ENCODE measurements at regions of chr6 and their contacts with region 1.

Region 1: DNA sequence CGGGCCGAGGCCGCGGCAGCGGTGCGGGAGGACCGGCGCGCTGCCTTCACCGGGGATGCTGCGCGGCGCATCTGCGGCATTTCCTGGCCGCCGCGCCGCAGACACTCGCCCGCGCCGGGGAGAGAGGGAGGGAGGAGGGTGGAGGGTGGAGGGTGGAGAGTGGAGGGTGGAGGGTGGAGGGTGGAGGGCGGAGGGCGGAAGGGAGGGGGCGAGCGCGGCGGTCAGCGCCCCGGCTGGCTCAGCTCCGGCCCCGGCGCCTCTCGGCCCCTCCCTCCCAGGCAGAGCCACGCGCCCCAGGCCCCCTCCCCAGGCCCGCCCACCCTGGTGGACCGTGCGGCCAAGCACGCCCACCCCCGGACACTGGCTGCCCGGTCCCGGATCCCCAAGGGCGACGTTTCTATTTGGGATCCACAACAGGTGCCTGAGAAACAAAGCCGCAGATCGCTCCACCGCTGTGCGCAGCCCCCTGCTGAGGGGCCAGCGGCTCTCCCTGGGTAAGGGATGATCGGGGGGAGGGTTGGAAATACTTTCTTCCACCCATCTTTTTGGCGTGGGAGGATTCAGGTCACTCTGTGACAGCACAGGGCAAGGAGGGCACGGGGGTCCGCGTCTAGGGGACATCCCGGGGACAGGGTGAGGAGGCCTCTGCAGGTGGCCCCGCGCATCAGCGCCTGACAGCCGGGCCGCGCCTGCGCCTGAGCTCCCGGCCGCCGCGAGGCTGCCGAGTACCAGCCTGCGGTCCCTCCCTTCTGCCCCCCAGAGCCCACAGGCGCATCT is 111.1 kb upstream of the BEND6 start:
- DNase-seq: peak; percentile 65
- H3K4me3 Mint-ChIP-seq: peak overlapping the region; percentile 92
- H3K27ac Mint-ChIP-seq: peak overlapping the region; percentile 88
- H3K4me1 Mint-ChIP-seq: peaks cover 16% of the 10 kb centered on the region
- H3K27me3 Mint-ChIP-seq: no peaks in the 10 kb centered on the region
- CTCF ChIP-seq: peak; percentile 33

Region 2: DNA sequence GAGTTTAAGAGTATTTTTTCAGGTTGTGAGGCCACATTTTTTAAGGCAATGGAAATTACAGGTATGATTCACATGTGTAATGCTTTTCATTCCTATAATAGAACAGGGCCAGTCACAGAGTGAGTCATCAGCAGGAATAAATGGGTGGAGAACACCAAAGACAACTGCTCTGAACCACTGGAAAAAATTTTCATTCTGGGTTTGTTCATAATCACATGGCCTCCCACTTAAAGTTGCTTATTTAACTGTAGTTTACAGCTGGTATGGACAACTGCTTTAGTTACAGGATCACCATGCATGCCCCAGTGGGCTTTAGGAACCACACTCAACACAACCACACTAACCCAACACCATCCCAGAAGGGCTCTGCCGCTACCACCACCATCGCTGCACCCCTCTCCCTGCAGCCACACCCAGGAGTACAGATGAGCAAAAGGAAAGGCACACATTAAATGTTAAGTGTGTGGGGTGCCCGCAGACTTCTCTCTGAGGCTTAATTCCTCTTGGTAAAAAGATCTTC is 94.1 kb before region 1 on chr6:
- CTCF ChIA-PET with region 1: interaction called, 4 read pairs
- POLR2A ChIA-PET with region 1: interaction called, 18 read pairs
- intact Hi-C with region 1: no loop called
- DNase-seq: peak; percentile 88
- H3K4me3 Mint-ChIP-seq: peak overlapping the region; percentile 65
- H3K27ac Mint-ChIP-seq: peak overlapping the region; percentile 91
- H3K4me1 Mint-ChIP-seq: peaks cover 51% of the 10 kb centered on the region
- H3K27me3 Mint-ChIP-seq: no peaks in the 10 kb centered on the region
- CTCF ChIP-seq: no peak

Region 3: DNA sequence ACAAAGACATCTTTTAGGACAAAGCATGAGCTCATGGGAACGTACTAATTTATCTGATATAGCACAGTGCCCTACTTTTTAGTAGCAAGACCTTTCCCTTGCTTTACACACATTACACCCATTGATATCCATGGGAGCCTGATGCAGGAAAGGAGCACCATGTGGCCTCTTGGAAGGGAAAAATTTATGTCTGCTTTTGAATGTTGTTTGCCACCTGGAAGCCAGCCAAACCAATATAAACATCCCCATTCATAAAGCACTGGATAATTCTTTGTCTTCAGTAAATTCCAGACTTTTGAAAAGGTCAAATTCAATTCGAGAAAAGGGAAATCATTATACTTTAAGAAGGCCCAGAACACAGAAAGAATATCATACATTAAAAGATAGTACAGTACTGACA is 41.2 kb before region 1 on chr6:
- CTCF ChIA-PET with region 1: interaction called, 5 read pairs
- POLR2A ChIA-PET with region 1: interaction called, 14 read pairs
- intact Hi-C with region 1: loop called (anchors 5 kb)
- DNase-seq: peak; percentile 34
- H3K4me3 Mint-ChIP-seq: no peak overlapping the region
- H3K27ac Mint-ChIP-seq: no peak overlapping the region
- H3K4me1 Mint-ChIP-seq: peaks cover 20% of the 10 kb centered on the region
- H3K27me3 Mint-ChIP-seq: no peaks in the 10 kb centered on the region
- CTCF ChIP-seq: no peak

Region 4: GRCh38 chr6:56808871-56809359 is 34.8 kb before region 1 on chr6:
- CTCF ChIA-PET with region 1: interaction called, 5 read pairs
- POLR2A ChIA-PET with region 1: interaction called, 14 read pairs
- intact Hi-C with region 1: loop called (anchors 5 kb)
- DNase-seq: peak; percentile 33
- H3K4me3 Mint-ChIP-seq: no peak overlapping the region
- H3K27ac Mint-ChIP-seq: peak overlapping the region; percentile 44
- H3K4me1 Mint-ChIP-seq: peaks cover 18% of the 10 kb centered on the region
- H3K27me3 Mint-ChIP-seq: no peaks in the 10 kb centered on the region
- CTCF ChIP-seq: no peak

Region 5: DNA sequence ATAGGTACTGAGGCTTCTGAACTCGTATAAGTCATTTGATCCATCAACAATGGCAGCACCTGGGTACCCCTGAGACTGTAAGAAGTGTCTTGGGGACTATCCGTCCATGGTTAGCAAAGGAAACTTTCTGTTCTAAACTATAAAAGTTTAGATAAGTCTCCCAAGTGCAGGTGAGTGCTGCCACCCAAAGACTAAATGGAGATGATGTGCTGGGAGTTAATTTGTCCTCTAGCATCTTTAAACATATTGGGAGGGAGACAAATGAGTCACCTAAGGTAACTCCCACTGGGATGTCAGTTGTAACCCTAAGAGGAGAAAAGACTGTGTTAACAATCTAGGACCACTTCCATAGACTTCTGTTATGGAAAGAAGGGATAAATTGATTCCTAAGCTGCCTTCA is 117.4 kb after region 1 on chr6:
- CTCF ChIA-PET with region 1: no interaction called
- POLR2A ChIA-PET with region 1: no interaction called
- intact Hi-C with region 1: no loop called
- DNase-seq: peak; percentile 33
- H3K4me3 Mint-ChIP-seq: no peak overlapping the region
- H3K27ac Mint-ChIP-seq: no peak overlapping the region
- H3K4me1 Mint-ChIP-seq: peaks cover 6% of the 10 kb centered on the region
- H3K27me3 Mint-ChIP-seq: no peaks in the 10 kb centered on the region
- CTCF ChIP-seq: no peak